ENCODE measurements at regions of chr1 and their contacts with region 1.

Region 1: GRCh38 chr1:40040511-40041465 is at the start of gene CAP1:
- DNase-seq: peak; percentile 99
- H3K4me3 Mint-ChIP-seq: peak within 1 kb of the TSS; percentile 93
- H3K27ac Mint-ChIP-seq: peak within 1 kb of the TSS; percentile 99
- H3K4me1 Mint-ChIP-seq: peaks cover 33% of the 10 kb centered on the region
- H3K27me3 Mint-ChIP-seq: no peaks in the 10 kb centered on the region
- CTCF ChIP-seq: no peak
- total RNA-seq, gene CAP1: 297 and 339 TPM in 2 replicates

Region 2: DNA sequence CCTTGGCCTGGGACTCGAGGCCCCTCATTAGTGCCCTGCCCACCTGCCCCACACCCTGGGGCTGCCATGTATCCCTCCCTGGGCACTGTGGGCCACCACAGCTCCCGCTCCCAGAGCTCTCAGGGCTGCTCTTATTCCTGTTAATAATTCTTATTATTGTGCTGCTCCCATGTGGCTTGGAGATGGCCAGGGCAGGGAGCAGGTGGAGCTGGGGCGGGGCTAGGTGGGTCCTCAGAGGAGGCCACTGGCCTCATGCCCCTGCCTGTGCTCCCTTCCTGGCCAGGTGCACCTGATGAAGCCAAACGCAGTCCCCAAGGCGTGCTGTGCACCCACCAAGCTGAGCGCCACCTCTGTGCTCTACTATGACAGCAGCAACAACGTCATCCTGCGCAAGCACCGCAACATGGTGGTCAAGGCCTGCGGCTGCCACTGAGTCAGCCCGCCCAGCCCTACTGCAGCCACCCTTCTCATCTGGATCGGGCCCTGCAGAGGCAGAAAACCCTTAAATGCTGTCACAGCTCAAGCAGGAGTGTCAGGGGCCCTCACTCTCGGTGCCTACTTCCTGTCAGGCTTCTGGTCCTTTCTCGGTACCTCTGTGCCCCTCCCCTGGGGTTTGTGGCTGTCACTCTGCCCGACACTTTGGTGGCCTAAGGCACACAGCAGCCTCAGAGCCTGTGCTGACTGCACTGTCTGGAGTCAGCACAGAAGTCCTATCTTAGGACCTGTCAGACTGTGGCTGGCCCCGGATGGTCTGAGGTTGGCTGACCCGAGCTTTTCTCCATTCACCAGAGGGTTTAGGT is 515.2 kb before region 1 on chr1:
- CTCF ChIA-PET with region 1: no interaction called
- POLR2A ChIA-PET with region 1: no interaction called
- intact Hi-C with region 1: no loop called
- DNase-seq: no peak
- H3K4me3 Mint-ChIP-seq: no peak overlapping the region
- H3K27ac Mint-ChIP-seq: no peak overlapping the region
- H3K4me1 Mint-ChIP-seq: no peaks in the 10 kb centered on the region
- H3K27me3 Mint-ChIP-seq: no peaks in the 10 kb centered on the region
- CTCF ChIP-seq: no peak

Region 3: GRCh38 chr1:39933956-39934941 is 106.5 kb before region 1 on chr1:
- CTCF ChIA-PET with region 1: no interaction called
- POLR2A ChIA-PET with region 1: interaction called, 15 read pairs
- intact Hi-C with region 1: no loop called
- DNase-seq: peak; percentile 100
- H3K4me3 Mint-ChIP-seq: peak overlapping the region; percentile 15
- H3K27ac Mint-ChIP-seq: peak overlapping the region; percentile 71
- H3K4me1 Mint-ChIP-seq: peaks cover 32% of the 10 kb centered on the region
- H3K27me3 Mint-ChIP-seq: no peaks in the 10 kb centered on the region
- CTCF ChIP-seq: no peak

Region 4: GRCh38 chr1:39940252-39940651 is 100.5 kb before region 1 on chr1:
- CTCF ChIA-PET with region 1: no interaction called
- POLR2A ChIA-PET with region 1: interaction called, 15 read pairs
- intact Hi-C with region 1: no loop called
- DNase-seq: no peak
- H3K4me3 Mint-ChIP-seq: no peak overlapping the region
- H3K27ac Mint-ChIP-seq: no peak overlapping the region
- H3K4me1 Mint-ChIP-seq: peaks cover 27% of the 10 kb centered on the region
- H3K27me3 Mint-ChIP-seq: no peaks in the 10 kb centered on the region
- CTCF ChIP-seq: no peak

Region 5: GRCh38 chr1:39954816-39955546 is 85.8 kb before region 1 on chr1 and contains the start of gene MFSD2A:
- CTCF ChIA-PET with region 1: no interaction called
- POLR2A ChIA-PET with region 1: interaction called, 17 read pairs
- intact Hi-C with region 1: no loop called
- DNase-seq: peak; percentile 95
- H3K4me3 Mint-ChIP-seq: peak within 1 kb of the TSS; percentile 82
- H3K27ac Mint-ChIP-seq: peak within 1 kb of the TSS; percentile 88
- H3K4me1 Mint-ChIP-seq: peaks cover 22% of the 10 kb centered on the region
- H3K27me3 Mint-ChIP-seq: no peaks in the 10 kb centered on the region
- CTCF ChIP-seq: no peak
- total RNA-seq, gene MFSD2A: 49.1 and 52.9 TPM in 2 replicates

Region 6: DNA sequence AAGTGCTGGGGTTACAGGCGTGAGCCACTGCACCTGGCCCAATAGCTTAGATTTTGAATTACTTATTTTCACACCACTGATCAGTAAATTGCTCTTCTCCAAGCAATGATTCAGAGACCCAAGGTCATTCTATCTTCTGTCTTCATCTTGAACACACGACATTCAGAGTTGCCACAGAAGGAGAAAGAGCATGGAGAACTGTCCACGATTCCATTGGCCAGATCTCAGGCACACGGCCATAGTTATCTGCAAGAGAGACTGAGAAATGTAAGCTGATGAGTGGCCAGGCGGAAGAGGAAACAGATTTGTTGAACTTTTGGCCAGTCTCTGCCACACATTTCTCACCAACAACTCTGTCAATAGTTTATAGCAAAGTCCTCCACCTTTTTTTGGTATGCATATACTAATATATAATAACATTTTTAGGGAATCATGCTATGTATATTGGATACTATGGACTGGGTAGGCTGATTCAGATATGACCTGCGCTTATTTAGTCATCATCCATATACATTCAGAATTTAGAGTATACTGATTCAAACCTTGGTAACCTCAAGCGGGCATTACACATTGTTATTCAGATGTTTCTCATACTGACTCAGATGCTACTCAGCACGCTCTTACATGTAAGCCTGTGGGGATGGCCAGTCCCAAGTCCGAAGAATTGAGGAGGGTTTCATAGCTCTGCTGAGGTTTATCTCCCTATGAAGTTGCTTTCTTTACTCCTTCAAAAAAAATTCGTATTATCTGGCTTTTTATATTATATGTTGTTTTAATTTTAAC is 25.8 kb before region 1 on chr1:
- CTCF ChIA-PET with region 1: no interaction called
- POLR2A ChIA-PET with region 1: interaction called, 28 read pairs
- intact Hi-C with region 1: no loop called
- DNase-seq: peak; percentile 76
- H3K4me3 Mint-ChIP-seq: no peak overlapping the region
- H3K27ac Mint-ChIP-seq: peak overlapping the region; percentile 82
- H3K4me1 Mint-ChIP-seq: peaks cover 17% of the 10 kb centered on the region
- H3K27me3 Mint-ChIP-seq: no peaks in the 10 kb centered on the region
- CTCF ChIP-seq: no peak

Region 7: DNA sequence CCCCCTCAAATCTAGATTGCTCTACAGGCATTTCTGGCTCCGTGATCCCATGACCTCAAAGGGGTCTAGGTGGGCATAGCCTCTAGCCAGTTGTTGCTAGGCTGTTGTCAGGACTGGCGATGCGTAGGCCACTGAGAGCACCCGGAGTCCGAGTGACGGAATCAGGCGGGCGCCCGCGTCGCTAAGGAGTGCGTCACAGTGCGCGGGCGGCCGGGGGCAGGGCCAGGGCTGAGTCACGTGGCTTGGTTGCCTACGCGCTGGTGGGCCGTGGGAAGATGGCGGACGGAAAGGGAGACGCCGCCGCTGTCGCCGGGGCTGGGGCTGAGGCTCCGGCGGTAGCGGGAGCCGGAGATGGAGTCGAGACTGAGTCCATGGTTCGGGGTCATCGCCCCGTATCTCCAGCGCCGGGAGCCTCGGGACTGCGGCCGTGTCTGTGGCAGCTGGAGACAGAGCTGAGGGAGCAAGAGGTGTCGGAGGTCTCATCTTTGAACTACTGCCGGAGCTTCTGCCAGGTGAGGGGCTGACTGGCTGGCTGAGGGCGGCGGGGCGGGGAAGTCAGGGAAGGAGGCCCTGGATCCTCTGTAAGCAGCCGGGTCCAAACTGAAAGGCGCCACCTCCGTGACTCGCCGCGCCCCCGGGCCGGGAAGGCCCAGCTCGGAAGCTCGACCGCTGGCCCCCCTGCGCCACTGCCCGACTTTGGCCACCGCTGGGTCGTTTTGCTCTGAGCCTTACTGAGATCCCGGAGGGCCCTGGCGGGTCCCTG is 120.5 kb after region 1 on chr1 and contains the start of gene RLF:
- CTCF ChIA-PET with region 1: no interaction called
- POLR2A ChIA-PET with region 1: interaction called, 12 read pairs
- intact Hi-C with region 1: no loop called
- DNase-seq: peak; percentile 92
- H3K4me3 Mint-ChIP-seq: no peak within 1 kb of the TSS
- H3K27ac Mint-ChIP-seq: no peak within 1 kb of the TSS
- H3K4me1 Mint-ChIP-seq: peaks cover 6% of the 10 kb centered on the region
- H3K27me3 Mint-ChIP-seq: no peaks in the 10 kb centered on the region
- CTCF ChIP-seq: no peak
- total RNA-seq, gene RLF: 8.8 and 11.2 TPM in 2 replicates

Region 8: DNA sequence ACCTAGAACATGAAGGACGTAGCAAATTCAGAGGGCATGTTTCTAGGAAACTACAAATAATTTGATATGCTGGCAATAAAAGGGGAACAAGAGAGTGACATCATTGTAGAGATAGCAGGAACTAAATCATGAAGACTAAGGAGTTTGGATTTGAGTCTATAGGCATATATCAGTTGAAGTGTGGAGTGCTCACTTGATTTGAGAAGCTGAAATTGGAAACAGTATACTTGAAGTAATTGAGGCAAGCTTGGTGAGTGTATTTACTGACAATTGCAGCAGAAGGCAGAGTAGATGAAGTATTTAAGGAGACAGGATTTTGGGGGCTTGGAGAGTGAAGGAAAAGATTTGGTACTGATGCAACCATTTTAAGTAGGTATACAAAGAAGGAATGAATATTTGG is 200.6 kb after region 1 on chr1:
- CTCF ChIA-PET with region 1: no interaction called
- POLR2A ChIA-PET with region 1: no interaction called
- intact Hi-C with region 1: no loop called
- DNase-seq: no peak
- H3K4me3 Mint-ChIP-seq: no peak overlapping the region
- H3K27ac Mint-ChIP-seq: peak overlapping the region; percentile 13
- H3K4me1 Mint-ChIP-seq: peaks cover 13% of the 10 kb centered on the region
- H3K27me3 Mint-ChIP-seq: no peaks in the 10 kb centered on the region
- CTCF ChIP-seq: no peak

Measured in MCF 10A (cell line).